ENCODE measurements at regions of chr22 and their contacts with region 1.

Region 1: GRCh38 chr22:46929046-46929709 is 166.7 kb downstream of the TBC1D22A start:
- DNase-seq: no peak
- ATAC-seq: no peak
- H3K4me3 ChIP-seq: no peak overlapping the region
- H3K4me3 Mint-ChIP-seq: no peak overlapping the region
- H3K27ac ChIP-seq: no peak overlapping the region
- H3K27ac Mint-ChIP-seq: no peak overlapping the region
- H3K4me1 ChIP-seq: no peaks in the 10 kb centered on the region
- H3K4me1 Mint-ChIP-seq: peaks cover 9 to 27% (median 15%) of the 10 kb centered on the region in 7 donors
- H3K27me3 ChIP-seq: no peaks in the 10 kb centered on the region
- H3K27me3 Mint-ChIP-seq: no peaks in the 10 kb centered on the region

Region 2: GRCh38 chr22:46381199-46381598 is 548.0 kb before region 1 on chr22:
- CTCF ChIA-PET with region 1: no interaction called
- POLR2A ChIA-PET with region 1: interaction called, 10 read pairs
- intact Hi-C with region 1: no loop called
- DNase-seq: no peak
- ATAC-seq: no peak
- H3K4me3 ChIP-seq: no peak overlapping the region
- H3K4me3 Mint-ChIP-seq: no peak overlapping the region
- H3K27ac ChIP-seq: no peak overlapping the region
- H3K27ac Mint-ChIP-seq: no peak overlapping the region
- H3K4me1 ChIP-seq: no peaks in the 10 kb centered on the region
- H3K4me1 Mint-ChIP-seq: no peaks in the 10 kb centered on the region
- H3K27me3 ChIP-seq: no peaks in the 10 kb centered on the region
- H3K27me3 Mint-ChIP-seq: no peaks in the 10 kb centered on the region

Region 3: GRCh38 chr22:46726066-46726985 is 202.9 kb before region 1 on chr22:
- CTCF ChIA-PET with region 1: no interaction called
- POLR2A ChIA-PET with region 1: no interaction called
- intact Hi-C with region 1: no loop called
- DNase-seq: no peak
- ATAC-seq: no peak
- H3K4me3 ChIP-seq: no peak overlapping the region
- H3K4me3 Mint-ChIP-seq: no peak overlapping the region
- H3K27ac ChIP-seq: no peak overlapping the region
- H3K27ac Mint-ChIP-seq: peak overlapping the region in 2 of 9 donors; percentile 53 to 78
- H3K4me1 ChIP-seq: peaks cover 10 to 11% of the 10 kb centered on the region in 2 donors
- H3K4me1 Mint-ChIP-seq: peaks cover 14 to 58% (median 37%) of the 10 kb centered on the region in 7 donors
- H3K27me3 ChIP-seq: no peaks in the 10 kb centered on the region
- H3K27me3 Mint-ChIP-seq: no peaks in the 10 kb centered on the region

Region 4: GRCh38 chr22:47328550-47329243 is 399.5 kb after region 1 on chr22:
- CTCF ChIA-PET with region 1: no interaction called
- POLR2A ChIA-PET with region 1: no interaction called
- intact Hi-C with region 1: no loop called
- DNase-seq: no peak
- ATAC-seq: no peak
- H3K4me3 ChIP-seq: no peak overlapping the region
- H3K4me3 Mint-ChIP-seq: no peak overlapping the region
- H3K27ac ChIP-seq: no peak overlapping the region
- H3K27ac Mint-ChIP-seq: no peak overlapping the region
- H3K4me1 ChIP-seq: no peaks in the 10 kb centered on the region
- H3K4me1 Mint-ChIP-seq: no peaks in the 10 kb centered on the region
- H3K27me3 ChIP-seq: no peaks in the 10 kb centered on the region
- H3K27me3 Mint-ChIP-seq: peaks cover 0 to 29% (median 14%) of the 10 kb centered on the region in 5 donors

Measured in naive thymus-derived CD4-positive, alpha-beta T cell (primary cell).